Brain microvascular endothelial cell (primary cell): ENCODE measurements at regions of chr12 and their contacts with region 1.

Region 1: DNA sequence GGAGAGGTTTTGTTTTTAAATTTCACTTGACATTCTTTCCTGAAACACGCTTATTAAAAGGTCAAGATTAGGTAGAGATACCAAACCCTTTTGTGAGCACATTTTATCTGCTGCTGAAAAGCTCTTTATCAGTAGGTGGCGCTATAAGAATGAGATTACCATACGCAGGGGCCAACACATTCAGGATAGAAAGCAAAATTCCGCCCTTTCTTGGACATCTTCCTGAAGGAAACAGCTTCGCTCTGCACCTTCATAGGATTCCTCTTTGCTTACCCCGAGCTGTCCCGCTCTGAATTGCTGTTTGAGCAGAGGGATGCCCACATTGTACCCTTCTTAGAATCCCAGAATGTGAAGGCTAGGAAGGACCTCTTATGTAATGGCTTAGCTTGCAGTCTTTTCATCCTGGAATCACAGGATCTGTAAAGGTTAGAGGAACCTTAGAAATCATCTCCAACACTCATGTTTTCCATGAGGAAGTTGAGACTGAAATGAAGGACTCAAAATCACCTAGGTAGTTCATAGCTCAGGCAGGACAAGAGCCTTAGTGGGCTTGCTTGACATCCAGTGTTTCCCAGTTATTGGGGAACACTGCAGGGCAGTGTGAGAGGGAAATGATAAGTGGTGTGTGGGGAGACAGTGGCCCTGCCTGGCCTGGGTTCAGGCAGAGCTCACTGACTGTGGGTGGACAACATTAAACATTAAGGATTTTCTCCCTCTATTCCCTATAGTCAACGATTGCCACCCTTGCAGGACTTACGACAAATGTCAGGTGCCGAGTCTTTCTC is 38.7 kb upstream of the CRY1 start:
- DNase-seq: peak; percentile 44
- H3K4me3 ChIP-seq: no peak overlapping the region
- H3K27ac ChIP-seq: no peak overlapping the region
- H3K27me3 ChIP-seq: no peaks in the 10 kb centered on the region
- CTCF ChIP-seq: peak; percentile 78

Region 2: DNA sequence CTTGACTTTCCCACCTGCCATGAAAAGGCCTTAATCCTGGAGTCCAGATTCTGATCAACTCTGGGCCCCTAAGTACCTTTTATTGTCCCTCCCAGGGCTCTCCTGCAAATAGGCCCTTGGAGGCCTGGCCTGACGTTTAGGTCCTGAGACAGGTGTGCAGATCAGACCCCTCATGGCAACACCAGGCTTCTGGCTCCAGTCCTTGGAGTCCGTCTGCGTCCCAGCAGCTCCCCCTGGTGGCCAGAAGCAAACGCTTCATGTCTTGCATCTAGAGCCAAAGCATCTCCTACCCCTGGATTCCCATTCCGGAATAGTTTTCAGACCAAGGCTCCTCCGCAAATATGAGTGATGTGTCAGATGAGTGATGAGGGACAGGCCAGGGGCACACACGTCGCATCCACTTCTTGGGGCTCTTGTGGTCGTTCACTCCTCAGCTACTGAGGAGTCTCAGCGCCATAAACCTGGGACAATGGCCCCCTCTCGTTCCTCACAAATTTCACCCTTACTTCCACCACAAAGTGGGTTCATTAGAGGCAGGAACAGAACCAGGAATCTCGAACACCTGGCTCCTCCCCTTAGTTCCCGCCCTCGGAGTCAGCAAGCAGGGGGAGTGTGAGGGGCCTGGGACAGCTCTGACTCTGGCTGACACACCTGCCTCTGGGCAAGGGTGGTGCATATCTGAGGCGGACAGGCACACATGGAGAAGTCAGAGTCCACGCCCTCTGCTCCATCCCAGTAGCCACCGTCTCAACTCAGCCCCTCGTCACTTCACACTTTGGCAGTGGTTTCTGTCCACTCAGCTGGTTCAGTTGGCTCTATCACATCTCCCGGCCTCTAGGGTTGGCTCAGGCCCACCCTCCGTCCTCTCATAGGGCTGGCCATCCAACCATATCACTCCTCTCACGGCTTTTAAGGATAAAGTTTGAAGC is 475.7 kb after region 1 on chr12:
- in situ Hi-C with region 1: loop called (anchors 25 kb)
- DNase-seq: peak; percentile 71
- H3K4me3 ChIP-seq: no peak overlapping the region
- H3K27ac ChIP-seq: no peak overlapping the region
- H3K27me3 ChIP-seq: no peaks in the 10 kb centered on the region
- CTCF ChIP-seq: peak; percentile 97